Activated naive CD4-positive, alpha-beta T cell treated with anti-CD3 and anti-CD28 coated beads for 36 hours (primary cell): ENCODE measurements at regions of chr5 and their contacts with region 1.

Region 1: GRCh38 chr5:80141147-80141671 is 106.1 kb downstream of the THBS4 start:
- DNase-seq: no peak
- H3K4me3 Mint-ChIP-seq: no peak overlapping the region
- H3K27ac Mint-ChIP-seq: peak overlapping the region; percentile 84
- H3K4me1 Mint-ChIP-seq: peaks cover 69% of the 10 kb centered on the region
- H3K27me3 Mint-ChIP-seq: no peaks in the 10 kb centered on the region

Region 2: DNA sequence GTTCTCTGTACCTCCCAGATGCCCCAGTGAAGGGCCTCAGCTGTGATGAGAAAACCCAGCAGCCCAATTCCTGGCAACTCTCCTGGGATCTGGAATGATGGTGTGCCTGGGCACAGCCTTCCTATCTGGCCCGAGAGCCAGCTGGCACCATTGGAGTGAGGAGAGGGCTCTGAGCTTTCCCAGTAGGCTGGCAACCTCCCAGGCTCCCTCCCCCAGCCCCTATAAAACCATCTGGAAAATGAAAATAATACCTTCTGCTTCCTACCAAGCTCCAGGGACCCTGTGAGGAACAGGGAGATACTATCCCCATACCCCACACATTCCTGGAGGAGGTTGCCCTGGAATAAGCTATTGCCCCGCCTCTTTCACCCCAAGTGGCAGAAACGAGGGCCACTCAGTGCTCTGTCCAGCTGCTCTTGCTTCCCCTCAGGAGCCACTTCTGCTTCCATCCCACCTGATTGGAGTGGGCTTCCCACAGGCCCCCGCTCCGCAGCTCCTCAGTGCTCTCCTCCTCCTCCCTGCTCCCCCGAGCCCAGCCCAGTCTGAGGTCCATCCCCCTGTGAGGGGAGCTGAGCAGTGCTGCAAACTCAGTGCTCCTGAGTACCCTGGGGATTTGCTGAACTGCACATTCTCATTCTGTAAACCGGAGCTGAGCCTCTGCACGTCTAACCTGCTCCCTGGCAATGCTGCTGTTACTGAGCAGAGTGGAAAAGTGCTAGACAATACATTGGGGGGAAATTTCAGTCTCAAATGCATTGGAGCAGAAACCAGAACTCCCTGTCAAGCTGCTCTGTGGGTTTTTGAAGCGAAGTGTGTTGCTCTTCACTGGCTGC is 31.3 kb before region 1 on chr5:
- CTCF ChIA-PET with region 1: no interaction called
- intact Hi-C with region 1: no loop called
- DNase-seq: no peak
- H3K4me3 Mint-ChIP-seq: no peak overlapping the region
- H3K27ac Mint-ChIP-seq: no peak overlapping the region
- H3K4me1 Mint-ChIP-seq: peaks cover 13% of the 10 kb centered on the region
- H3K27me3 Mint-ChIP-seq: no peaks in the 10 kb centered on the region

Region 3: DNA sequence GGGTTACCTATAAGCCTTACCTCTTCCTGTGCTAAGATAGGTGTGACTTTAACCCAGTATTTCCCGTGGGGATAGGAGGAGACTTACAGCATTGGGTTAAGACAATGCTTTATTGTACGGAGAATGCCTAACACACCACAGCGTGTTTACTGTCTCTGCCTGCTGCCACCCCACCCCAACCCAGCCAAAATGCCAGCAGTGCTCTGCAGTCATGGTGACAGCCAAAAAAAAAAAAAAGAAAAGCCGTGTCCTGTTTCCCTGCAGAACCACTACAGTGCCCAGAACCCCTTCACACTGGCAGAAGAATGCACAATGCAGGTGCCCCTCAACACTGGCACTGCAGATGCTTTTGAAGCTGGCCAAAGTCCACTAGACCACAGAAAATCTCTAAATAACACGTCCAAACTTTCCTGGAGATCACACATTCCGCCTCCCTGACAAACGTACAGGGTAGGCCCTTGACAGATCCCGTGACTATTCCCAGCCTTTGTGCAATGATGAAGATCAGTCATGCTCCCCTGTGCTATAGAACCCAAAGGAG is 12.4 kb after region 1 on chr5:
- CTCF ChIA-PET with region 1: interaction called, 3 read pairs
- intact Hi-C with region 1: loop called (anchors 2 kb)
- DNase-seq: no peak
- H3K4me3 Mint-ChIP-seq: no peak overlapping the region
- H3K27ac Mint-ChIP-seq: peak overlapping the region; percentile 86
- H3K4me1 Mint-ChIP-seq: peaks cover 53% of the 10 kb centered on the region
- H3K27me3 Mint-ChIP-seq: no peaks in the 10 kb centered on the region

Region 4: GRCh38 chr5:80565330-80565729 is 424.1 kb after region 1 on chr5:
- CTCF ChIA-PET with region 1: no interaction called
- intact Hi-C with region 1: no loop called
- DNase-seq: no peak
- H3K4me3 Mint-ChIP-seq: no peak overlapping the region
- H3K27ac Mint-ChIP-seq: no peak overlapping the region
- H3K4me1 Mint-ChIP-seq: peaks cover 3% of the 10 kb centered on the region
- H3K27me3 Mint-ChIP-seq: peaks cover 29% of the 10 kb centered on the region

Region 5: DNA sequence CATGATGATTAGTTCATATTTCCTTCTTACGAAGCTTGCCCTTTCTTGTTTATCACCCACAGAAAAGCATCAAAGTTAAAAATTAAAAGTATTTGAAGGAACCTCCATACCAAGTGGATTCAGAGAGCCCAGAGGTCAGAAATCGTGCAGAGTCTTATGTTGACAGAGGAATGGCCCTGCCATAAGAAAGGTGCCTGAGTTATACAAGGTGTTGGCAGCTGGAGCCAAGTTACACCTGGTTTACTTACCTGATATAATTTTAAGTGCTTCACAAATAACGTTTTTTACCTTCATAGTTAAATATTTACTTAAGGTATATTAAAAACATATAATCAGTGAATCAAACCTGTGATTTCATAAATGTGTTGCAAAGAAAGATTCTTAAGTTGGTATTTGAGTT is 555.9 kb after region 1 on chr5:
- CTCF ChIA-PET with region 1: no interaction called
- intact Hi-C with region 1: no loop called
- DNase-seq: no peak
- H3K4me3 Mint-ChIP-seq: no peak overlapping the region
- H3K27ac Mint-ChIP-seq: no peak overlapping the region
- H3K4me1 Mint-ChIP-seq: peaks cover 5% of the 10 kb centered on the region
- H3K27me3 Mint-ChIP-seq: no peaks in the 10 kb centered on the region